ENCODE measurements at regions of chr22 and their contacts with region 1.

Region 1: DNA sequence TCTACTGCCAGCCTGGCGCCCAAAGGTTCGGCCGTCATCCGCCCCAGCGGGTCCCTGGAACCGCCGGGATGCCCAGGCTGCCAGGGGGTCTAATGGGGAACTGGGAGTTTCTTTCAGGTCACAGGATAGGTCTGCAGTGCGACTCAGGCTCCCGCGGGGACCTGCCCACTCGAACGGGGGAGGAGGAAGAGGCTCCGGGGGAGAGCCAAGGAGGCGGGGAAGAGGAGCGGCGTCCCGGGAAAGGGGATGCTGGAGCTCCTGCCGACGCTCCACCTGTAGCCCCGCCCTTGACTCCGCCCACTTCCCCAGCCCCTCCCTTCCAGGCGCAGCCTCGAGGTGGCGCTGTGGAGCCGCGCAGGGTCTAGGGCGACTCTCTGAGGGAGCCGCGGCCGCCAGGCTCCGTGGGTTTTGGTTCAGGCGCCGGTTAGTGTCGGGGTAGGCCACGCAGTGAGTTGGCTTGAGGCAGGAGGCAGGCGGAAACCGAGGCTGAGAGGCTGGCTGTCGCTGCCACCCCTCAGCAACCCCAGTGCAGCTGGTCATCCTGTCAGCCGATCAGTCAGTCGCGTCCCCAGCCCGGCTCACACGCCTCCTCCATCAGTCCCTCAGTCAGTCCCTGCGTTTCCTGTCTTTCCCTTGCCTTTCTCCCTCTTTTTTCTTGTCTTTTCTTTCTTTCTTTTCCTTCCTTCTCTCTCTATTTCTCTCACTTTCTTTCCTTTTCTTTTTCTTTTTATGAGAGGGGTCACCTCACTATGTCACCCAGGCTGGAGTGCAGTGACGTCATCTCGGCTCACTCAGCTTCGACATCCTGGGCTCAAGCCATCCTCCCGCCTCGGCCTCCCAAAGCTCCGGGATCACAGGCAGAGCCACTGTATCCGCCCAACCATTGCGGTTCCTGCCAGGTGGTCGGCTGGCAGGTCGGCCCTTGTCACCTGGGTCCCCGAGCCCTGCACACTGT is 26.4 kb downstream of the YWHAH start:
- DNase-seq: peak; percentile 93
- ATAC-seq: peak; percentile 92
- H3K4me3 Mint-ChIP-seq: peak overlapping the region; percentile 91
- H3K27ac Mint-ChIP-seq: no peak overlapping the region
- H3K4me1 Mint-ChIP-seq: peaks cover 3% of the 10 kb centered on the region; the same call in 1 of the 2 replicates
- H3K27me3 Mint-ChIP-seq: peaks cover 6% of the 10 kb centered on the region; the same call in 1 of the 2 replicates
- CTCF ChIP-seq: peak; percentile 98

Region 2: GRCh38 chr22:31707519-31707918 is 263.2 kb before region 1 on chr22:
- CTCF ChIA-PET with region 1: interaction called, 14 read pairs
- POLR2A ChIA-PET with region 1: no interaction called
- DNase-seq: no peak
- ATAC-seq: no peak
- H3K4me3 Mint-ChIP-seq: no peak overlapping the region
- H3K27ac Mint-ChIP-seq: no peak overlapping the region
- H3K4me1 Mint-ChIP-seq: no peaks in the 10 kb centered on the region
- H3K27me3 Mint-ChIP-seq: no peaks in the 10 kb centered on the region
- CTCF ChIP-seq: no peak

Region 3: DNA sequence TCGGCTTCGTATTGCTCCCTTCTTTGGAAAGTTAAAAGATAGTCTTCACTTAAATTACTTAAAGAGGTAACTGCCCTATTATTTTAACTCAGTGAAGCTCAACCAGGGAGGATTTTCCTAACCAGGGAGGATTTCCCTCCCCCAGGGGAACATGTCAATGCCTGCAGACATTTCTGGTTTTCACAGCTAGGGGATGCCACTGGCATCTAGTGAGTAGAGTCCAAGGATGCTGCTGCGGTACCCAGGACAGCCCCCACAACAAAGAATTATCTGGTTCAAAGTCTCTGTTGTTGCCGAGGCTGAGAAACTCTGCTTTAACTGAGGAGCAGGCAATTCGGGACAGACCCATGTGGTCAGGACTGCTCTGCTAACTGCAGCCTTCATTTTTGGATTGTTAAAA is 134.8 kb before region 1 on chr22:
- CTCF ChIA-PET with region 1: interaction called, 15 read pairs
- POLR2A ChIA-PET with region 1: no interaction called
- DNase-seq: no peak
- ATAC-seq: peak; percentile 39; the same call in 1 of the 2 replicates
- H3K4me3 Mint-ChIP-seq: no peak overlapping the region
- H3K27ac Mint-ChIP-seq: no peak overlapping the region
- H3K4me1 Mint-ChIP-seq: no peaks in the 10 kb centered on the region
- H3K27me3 Mint-ChIP-seq: no peaks in the 10 kb centered on the region
- CTCF ChIP-seq: no peak

Region 4: GRCh38 chr22:31897842-31898805 is 72.6 kb before region 1 on chr22:
- CTCF ChIA-PET with region 1: interaction called, 13 read pairs
- POLR2A ChIA-PET with region 1: no interaction called
- DNase-seq: no peak
- ATAC-seq: no peak
- H3K4me3 Mint-ChIP-seq: no peak overlapping the region
- H3K27ac Mint-ChIP-seq: peak overlapping the region; percentile 41
- H3K4me1 Mint-ChIP-seq: peaks cover 15% of the 10 kb centered on the region
- H3K27me3 Mint-ChIP-seq: no peaks in the 10 kb centered on the region
- CTCF ChIP-seq: no peak

Region 5: DNA sequence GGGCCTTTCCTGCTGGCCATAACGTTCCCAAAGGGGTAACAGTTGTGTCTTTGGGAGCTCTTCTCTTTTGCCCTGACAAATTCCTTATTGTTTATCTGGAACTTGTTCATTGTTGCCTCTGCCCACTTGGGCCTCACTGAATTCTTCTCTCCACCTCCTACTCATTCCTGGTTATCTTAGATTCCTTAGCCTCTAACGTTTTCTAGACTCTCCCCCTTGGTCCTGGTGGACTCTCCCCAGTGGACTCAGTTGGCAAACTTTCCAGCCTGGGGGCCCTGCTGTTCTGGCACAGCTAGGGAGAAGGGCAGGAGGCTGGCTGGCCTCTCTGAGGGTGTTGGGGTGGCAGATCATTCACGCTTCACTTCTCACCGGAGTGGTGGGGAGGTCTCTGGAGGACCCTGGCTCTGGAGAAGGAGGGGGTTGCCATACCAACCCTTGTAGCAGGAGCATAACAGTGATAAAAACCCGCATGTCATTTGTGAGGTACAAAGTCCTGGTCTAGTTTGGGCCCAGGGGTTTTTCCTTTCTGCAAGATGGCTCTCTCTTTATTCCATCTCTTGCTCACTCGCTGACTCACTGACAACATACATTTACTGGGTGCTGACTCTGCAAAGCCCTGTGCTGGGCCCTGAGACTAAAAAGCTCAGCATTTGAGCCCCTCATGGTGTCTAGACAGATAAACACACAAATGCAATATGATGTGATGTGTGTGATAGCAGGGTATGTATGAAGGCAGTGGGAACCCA is 13.3 kb after region 1 on chr22:
- CTCF ChIA-PET with region 1: interaction called, 27 read pairs
- POLR2A ChIA-PET with region 1: no interaction called
- DNase-seq: no peak
- ATAC-seq: no peak
- H3K4me3 Mint-ChIP-seq: no peak overlapping the region
- H3K27ac Mint-ChIP-seq: no peak overlapping the region
- H3K4me1 Mint-ChIP-seq: no peaks in the 10 kb centered on the region
- H3K27me3 Mint-ChIP-seq: no peaks in the 10 kb centered on the region
- CTCF ChIP-seq: no peak

Region 6: DNA sequence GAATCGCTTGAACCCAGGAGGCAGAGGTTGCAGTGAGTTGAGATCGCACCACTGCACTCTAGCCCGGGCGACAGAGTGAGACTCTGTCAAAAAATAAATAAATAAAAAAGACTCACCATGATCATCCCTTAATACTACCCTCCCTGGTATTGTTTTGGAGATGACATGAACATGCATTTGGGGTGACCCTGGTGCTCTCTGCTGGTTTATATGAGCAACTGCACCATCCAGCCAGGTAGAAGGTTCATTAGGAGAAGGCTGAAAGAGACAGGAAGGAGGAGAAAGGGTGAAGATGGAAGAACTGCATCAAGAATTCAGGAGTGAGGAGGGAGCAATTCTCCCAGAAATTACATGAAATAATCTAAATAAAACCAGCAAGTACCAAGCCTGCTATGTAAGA is 110.1 kb after region 1 on chr22:
- CTCF ChIA-PET with region 1: interaction called, 46 read pairs
- POLR2A ChIA-PET with region 1: no interaction called
- DNase-seq: peak; percentile 27
- ATAC-seq: peak; percentile 94
- H3K4me3 Mint-ChIP-seq: no peak overlapping the region
- H3K27ac Mint-ChIP-seq: no peak overlapping the region
- H3K4me1 Mint-ChIP-seq: no peaks in the 10 kb centered on the region
- H3K27me3 Mint-ChIP-seq: peaks cover 2% of the 10 kb centered on the region; the same call in 1 of the 2 replicates
- CTCF ChIP-seq: peak; percentile 57

Region 7: DNA sequence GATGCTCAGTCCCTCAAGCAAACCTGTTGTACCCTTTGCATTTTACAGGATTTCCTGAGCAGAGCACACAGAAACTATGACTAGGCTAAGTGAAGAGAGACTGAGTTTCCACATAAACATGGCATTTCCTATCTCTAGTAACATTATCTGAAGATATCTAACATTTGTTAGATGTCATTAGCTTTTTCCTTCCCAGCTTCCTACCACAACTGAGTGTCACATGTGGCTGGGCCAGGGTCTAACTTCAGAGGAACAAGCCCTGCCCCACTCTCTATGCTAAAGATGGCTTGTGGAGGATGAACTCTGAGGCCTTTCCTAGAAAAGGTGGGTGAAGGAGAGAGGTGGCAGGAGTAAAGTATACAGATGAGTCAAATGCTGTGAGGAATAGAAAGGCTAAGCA is 171.8 kb after region 1 on chr22:
- CTCF ChIA-PET with region 1: no interaction called
- POLR2A ChIA-PET with region 1: no interaction called
- DNase-seq: no peak
- ATAC-seq: no peak
- H3K4me3 Mint-ChIP-seq: no peak overlapping the region
- H3K27ac Mint-ChIP-seq: no peak overlapping the region
- H3K4me1 Mint-ChIP-seq: peaks cover 28% of the 10 kb centered on the region
- H3K27me3 Mint-ChIP-seq: peaks cover 8% of the 10 kb centered on the region; the same call in 1 of the 2 replicates
- CTCF ChIP-seq: no peak

Region 8: DNA sequence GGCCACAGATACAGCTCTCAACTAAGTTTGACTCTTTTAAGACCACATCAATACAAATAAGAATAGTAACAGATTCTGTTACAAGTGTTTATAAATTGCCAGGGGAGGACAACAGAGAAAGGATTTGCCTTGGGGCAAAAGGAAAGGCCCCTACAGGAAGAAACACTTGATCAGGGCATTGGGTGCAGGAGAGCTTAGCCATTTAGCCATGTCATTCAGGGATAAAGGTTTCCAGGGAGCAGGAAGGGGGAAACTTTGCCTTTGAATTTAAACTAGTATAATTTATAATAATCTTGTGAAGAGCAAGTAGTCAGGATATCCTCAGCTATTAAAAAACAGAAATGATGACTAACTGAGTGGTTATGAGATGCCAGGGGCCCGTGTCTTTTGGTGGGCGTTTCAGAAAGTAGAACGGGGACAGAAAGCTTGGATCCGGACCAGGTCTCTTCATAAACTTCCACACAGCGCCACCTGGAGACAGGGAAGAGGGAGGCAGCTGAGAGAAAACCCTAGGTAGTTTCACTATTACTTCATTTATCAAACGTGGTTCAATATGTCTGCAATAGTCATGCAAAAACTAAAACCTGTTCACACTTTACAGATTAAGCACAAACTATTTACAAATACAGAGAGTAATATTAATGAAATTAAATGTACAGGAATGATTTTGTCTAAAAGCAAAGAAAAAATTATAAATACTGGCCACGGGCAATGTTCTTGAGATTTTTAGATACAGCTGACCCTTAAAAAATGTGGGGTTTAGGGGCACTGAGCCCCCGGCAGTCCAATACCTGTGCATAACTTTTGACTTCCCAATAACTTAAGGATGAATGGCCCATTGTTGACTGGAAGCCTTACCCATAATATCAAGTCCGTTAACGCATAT is 295.4 kb after region 1 on chr22:
- CTCF ChIA-PET with region 1: interaction called, 11 read pairs
- POLR2A ChIA-PET with region 1: no interaction called
- DNase-seq: peak; percentile 71
- ATAC-seq: peak; percentile 85
- H3K4me3 Mint-ChIP-seq: no peak overlapping the region
- H3K27ac Mint-ChIP-seq: peak overlapping the region; percentile 39
- H3K4me1 Mint-ChIP-seq: peaks cover 9% of the 10 kb centered on the region
- H3K27me3 Mint-ChIP-seq: no peaks in the 10 kb centered on the region; the same call in 1 of the 2 replicates
- CTCF ChIP-seq: peak; percentile 89

Measured in WTC11 (cell line).